ENCODE measurements at regions of chr19 and their contacts with region 1.

Region 1: DNA sequence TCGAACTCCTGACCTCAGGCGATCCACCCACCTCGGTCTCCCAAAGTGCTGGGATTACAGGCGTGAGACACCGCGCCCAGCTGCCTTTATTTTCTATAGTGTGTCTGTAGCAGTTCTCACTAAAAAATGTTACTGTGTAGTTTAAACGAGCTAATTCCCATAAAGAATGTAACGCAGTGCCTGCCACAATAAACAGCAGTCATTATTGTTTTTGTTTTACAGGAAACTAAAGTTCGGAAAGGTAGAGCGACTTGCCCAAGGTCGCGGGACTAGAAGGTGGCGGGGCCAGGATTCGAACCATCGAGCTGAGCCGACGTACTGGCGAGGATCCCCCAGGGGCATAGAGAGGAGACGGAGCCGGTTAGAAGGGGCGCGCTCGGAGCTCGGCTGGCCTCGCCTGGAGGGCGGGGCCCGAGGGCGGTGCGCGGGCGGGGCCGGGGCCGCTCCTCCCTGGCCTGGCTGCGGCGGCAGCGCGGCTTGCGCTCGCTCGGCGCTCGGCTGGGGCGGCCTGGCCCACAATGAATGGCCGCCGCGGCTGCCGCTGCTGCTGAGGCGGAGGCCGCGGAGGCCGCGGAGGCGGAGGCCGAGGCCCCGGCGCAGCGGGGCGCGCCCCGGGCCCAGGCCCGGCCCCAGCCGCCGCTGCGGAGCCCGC is at the start of gene NACC1:
- DNase-seq: peak; percentile 93
- H3K4me3 Mint-ChIP-seq: peak within 1 kb of the TSS; percentile 96
- H3K27ac Mint-ChIP-seq: peak within 1 kb of the TSS; percentile 94
- H3K4me1 Mint-ChIP-seq: peaks cover 52% of the 10 kb centered on the region
- H3K27me3 Mint-ChIP-seq: no peaks in the 10 kb centered on the region
- total RNA-seq, gene NACC1: 74.5 to 82.2 TPM

Region 2: DNA sequence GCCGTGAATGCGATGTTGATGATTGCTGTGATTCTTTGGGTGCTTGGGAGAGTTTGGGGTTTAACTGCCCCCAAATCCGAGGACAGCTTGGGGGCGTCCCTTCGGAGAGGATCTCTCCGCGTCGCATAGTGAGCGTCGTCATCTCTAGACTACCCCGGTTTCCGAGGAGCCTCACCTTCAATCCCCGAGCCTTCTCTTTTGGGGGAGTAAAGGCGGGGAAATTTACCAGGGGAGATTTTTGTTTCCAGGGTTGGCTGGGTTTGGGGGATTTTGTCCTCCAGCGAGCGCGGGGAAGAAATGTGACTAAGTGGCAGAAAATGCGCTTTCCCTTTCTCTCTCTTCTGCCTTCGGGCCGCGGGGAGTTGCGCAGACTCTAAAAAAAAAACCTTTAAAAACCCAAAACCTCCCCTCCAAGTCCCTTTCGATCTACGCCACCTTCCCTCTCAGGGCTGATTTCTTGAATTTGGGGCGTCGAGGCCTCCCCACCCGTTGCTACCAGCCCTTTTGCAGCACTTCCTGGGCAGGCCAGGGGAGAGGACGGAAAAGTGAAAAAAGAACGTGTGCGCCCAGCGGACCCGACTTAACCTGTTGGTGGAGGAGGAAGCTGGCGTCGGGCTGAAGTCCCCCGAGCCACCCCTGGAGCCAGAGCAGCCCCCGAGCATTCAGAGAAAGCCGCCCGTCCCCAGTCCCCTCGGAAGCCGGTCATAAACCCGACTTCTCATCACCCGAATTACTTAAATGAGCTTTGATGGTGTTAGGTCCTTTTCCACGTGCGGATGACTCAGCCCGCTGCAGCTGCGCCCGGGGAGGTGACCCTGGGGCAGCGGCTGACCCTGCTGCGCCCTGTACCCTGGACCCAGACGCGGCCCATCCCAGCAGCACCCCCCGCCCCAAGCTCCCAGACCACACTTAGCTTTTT is 104.9 kb before region 1 on chr19:
- CTCF ChIA-PET with region 1: no interaction called
- POLR2A ChIA-PET with region 1: no interaction called
- DNase-seq: peak; percentile 18
- H3K4me3 Mint-ChIP-seq: peak overlapping the region; percentile 39
- H3K27ac Mint-ChIP-seq: peak overlapping the region; percentile 42
- H3K4me1 Mint-ChIP-seq: peaks cover 19% of the 10 kb centered on the region
- H3K27me3 Mint-ChIP-seq: peaks cover 78% of the 10 kb centered on the region

Region 3: DNA sequence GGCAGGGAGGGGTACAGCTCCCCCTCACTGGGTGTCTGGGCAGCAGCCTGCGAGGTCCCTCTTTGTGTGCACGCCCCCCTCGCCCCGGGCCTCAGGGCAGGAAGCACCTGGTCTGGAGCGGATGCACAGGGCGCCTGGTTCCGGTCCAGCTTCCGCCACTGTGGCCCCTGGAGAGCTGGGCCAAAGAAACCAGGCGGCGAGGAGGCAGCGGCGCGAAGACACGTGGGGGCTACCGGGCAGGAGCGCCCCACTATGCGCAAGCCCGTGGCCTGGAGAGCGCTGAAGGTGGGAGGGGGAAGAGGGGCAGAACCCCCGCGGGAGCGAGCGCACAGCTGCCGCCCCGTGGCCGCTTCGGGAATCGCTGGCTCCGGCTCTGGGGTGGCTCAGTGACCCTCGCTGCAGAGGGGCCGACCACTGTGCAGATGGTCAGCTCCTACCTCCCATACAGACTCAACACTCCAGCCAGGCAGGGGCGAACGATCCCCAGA is 13.5 kb before region 1 on chr19:
- CTCF ChIA-PET with region 1: interaction called, 12 read pairs
- POLR2A ChIA-PET with region 1: interaction called, 46 read pairs
- DNase-seq: peak; percentile 70
- H3K4me3 Mint-ChIP-seq: peak overlapping the region; percentile 90
- H3K27ac Mint-ChIP-seq: peak overlapping the region; percentile 89
- H3K4me1 Mint-ChIP-seq: peaks cover 45% of the 10 kb centered on the region
- H3K27me3 Mint-ChIP-seq: no peaks in the 10 kb centered on the region

Region 4: DNA sequence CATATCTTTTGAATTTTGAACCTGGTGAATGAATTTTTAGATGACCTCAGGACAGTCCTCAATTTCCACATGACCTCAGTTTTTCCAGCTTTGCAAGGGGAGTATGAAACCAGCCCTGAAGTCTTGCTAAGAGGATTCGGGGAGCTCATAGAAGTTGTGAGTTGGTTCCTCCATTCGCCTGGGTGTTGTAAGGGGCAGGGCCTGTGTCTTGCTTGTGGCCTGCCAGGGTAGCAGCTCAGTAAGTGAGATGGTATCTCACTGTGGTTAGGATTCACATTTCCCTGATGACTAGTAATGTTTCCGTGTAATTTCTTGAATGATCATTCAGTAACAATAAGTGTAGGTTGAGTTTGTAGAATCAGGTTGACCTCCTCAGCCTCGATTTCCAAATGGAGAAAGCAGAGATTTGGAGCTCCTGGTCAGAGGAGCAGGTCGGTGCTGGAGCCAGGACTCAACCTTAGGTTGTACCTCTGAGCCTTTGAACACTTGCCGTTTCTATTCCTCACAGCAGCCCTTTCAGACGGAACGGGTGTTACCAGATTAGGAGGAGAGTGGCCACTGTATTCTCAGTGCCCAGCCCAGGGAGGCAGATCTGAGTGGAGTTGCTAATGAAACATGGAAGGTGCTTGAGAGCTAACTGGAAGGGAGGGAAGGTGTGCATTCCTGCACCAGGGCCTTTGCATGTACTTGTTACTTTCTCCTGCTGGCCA is 14.7 kb after region 1 on chr19:
- CTCF ChIA-PET with region 1: interaction called, 11 read pairs
- POLR2A ChIA-PET with region 1: interaction called, 65 read pairs
- DNase-seq: peak; percentile 78
- H3K4me3 Mint-ChIP-seq: peak overlapping the region; percentile 61
- H3K27ac Mint-ChIP-seq: peak overlapping the region; percentile 91
- H3K4me1 Mint-ChIP-seq: peaks cover 45% of the 10 kb centered on the region
- H3K27me3 Mint-ChIP-seq: no peaks in the 10 kb centered on the region